BJ (cell line): ENCODE measurements at regions of chr3 and their contacts with region 1.

Region 1: DNA sequence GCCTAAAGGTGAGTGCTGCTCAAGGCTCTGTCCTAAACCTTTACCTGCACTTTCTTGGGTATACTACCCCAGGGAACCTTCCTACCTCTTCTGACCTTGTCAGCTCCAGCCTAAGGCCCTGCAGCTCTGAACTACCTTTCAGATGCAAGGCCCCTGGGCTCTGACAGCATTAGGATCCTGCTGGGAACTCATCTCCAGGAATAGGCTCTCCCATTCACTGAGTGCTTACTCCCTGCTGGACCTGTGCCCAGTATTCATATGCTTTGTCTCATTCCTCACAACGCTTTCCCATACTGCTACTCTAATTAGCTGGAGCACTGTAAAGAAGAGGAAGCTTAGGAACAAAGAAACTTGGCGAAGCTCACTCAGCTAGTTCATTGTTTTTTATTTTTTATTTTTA is 53.8 kb upstream of the RAB6B start:
- DNase-seq: no peak
- H3K4me3 ChIP-seq: no peak overlapping the region
- H3K27me3 ChIP-seq: peaks cover 2% of the 10 kb centered on the region; the same call in 1 of the 2 replicates
- CTCF ChIP-seq: no peak

Region 2: DNA sequence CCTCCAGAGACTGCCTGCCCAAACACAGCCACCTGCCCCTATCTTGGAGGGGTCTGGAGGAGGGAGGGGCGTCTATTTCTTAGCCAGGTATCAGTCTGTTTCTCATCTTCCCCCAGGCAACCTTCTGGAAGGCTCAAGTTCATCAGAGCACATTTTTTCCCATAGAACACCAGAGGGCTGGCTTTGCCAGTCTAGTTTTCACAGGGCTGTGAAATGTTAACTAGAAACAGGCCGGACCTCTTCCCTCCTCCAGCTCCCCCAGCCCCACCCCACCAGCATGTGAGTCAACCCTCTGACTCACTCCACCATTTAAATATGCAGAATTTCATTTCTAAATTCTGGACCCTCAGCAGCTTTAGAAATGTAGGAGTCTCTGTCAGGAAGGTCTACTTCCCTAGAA is 13.4 kb after region 1 on chr3:
- CTCF ChIA-PET with region 1: interaction called, 13 read pairs
- POLR2A ChIA-PET with region 1: no interaction called
- DNase-seq: peak; percentile 45
- H3K4me3 ChIP-seq: no peak overlapping the region
- H3K27me3 ChIP-seq: no peaks in the 10 kb centered on the region
- CTCF ChIP-seq: peak; percentile 36